Naive thymus-derived CD4-positive, alpha-beta T cell (primary cell): ENCODE measurements at regions of chr18 and their contacts with region 1.

Region 1: DNA sequence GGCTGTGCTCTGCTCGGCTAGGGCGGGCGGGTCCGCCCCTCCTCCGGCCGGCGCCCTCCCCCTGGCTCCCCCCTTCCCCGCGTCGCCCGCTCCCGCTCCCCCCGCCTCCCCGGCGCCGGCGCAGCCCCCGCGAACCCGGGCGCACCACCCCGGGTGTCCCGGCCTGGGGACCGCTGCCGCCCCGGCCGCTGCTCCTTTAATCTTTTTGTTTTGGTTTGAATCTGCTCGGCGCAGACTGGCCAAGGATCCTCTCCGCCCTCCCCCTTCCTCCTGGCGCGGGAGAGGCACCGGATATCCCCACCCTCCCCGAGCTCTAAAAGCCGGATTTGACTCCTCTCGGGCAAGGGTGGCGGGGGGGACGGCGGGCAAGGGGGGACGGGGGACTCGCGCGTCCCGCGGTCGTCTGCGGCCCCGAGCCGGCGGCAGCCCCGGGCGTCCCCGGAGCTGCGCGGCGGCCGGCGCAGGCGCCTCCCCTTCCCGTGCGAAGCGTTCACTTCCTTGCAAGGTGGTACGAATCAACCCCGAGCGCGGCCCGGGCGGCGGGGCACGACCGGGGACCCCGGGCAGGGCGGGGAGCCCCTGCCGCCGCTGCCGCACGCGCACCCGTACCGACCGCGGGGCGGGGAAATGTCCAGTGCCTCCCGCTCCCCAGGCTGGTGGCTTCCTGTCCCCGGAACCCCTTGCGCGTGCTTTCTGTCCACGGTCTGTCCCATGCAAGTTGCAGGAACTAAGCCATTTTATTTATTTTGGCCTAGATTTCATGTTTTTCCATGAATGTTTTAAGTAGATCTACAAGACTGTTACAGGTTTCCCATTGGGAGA is at the start of gene PTGR3:
- DNase-seq: peak; percentile 55 to 78 (median 74)
- ATAC-seq: peak; percentile 67
- H3K4me3 ChIP-seq: peak within 1 kb of the TSS; percentile 89
- H3K4me3 Mint-ChIP-seq: peak within 1 kb of the TSS; percentile 96 to 100 (median 99)
- H3K27ac ChIP-seq: peak within 1 kb of the TSS; percentile 90
- H3K27ac Mint-ChIP-seq: peak within 1 kb of the TSS; percentile 94 to 99 (median 98)
- H3K4me1 ChIP-seq: peaks cover 26 to 33% of the 10 kb centered on the region in 2 donors
- H3K4me1 Mint-ChIP-seq: peaks cover 48 to 67% (median 56%) of the 10 kb centered on the region in 7 donors
- H3K27me3 ChIP-seq: no peaks in the 10 kb centered on the region
- H3K27me3 Mint-ChIP-seq: peaks cover 0 to 36% (median 0%) of the 10 kb centered on the region in 5 donors
- total RNA-seq, gene PTGR3: 25.1 to 59.1 (median 31.7) TPM

Region 2: DNA sequence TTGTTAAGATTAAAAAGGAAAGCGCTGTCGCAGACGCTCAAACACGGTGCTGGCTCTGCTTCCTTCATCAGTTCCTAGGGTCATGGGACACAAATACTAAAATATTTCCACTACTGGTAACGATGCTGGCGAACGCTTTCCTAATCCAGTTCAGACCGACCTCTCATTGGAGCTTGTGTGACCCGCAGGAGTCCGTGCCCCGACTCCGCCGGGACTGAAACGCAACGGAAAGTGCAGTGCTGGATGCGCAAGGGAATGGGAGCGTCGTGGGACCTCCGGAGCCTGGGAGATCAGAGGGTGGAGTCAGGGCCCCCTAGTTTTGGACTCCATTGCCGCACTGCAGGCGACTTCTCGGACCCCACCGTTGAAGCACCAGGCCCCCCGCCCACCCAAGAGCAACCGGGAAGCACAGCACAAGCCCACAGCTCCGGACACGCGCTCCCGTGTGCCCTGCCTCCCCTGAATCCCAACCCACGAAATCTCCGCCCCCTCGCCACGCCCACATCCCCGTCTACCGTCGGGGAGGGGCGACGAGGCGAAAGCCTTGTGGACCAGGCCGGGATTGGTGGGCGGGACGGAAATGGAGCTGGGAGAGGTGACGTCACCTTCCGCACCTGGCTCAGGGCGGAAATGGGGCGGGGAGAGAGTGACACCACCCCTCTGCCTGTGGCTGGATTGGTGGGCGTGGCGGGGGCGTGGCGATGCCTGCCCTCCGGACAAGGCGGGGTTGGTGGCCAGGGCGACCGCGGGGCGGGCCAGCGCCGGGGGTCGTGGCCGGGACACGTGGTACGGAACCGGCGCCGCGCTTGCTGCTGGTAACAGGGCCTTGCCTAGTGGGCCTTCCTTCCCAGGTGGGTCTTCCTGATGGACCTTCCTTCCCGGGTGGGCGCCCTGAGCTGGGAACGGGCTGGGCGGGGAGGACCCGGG is 713.5 kb before region 1 on chr18 and contains the start of gene CNDP2:
- CTCF ChIA-PET with region 1: no interaction called
- POLR2A ChIA-PET with region 1: no interaction called
- intact Hi-C with region 1: loop called (anchors 1 kb)
- DNase-seq: peak; percentile 93 to 100 (median 94)
- ATAC-seq: peak; percentile 89
- H3K4me3 ChIP-seq: peak within 1 kb of the TSS; percentile 75
- H3K4me3 Mint-ChIP-seq: peak within 1 kb of the TSS; percentile 79 to 98 (median 92)
- H3K27ac ChIP-seq: peak within 1 kb of the TSS; percentile 93
- H3K27ac Mint-ChIP-seq: peak within 1 kb of the TSS; percentile 95 to 100 (median 98)
- H3K4me1 ChIP-seq: peaks cover 33 to 43% of the 10 kb centered on the region in 2 donors
- H3K4me1 Mint-ChIP-seq: peaks cover 21 to 62% (median 49%) of the 10 kb centered on the region in 7 donors
- H3K27me3 ChIP-seq: no peaks in the 10 kb centered on the region
- H3K27me3 Mint-ChIP-seq: peaks cover 0 to 20% (median 0%) of the 10 kb centered on the region in 5 donors
- total RNA-seq, gene CNDP2: 112 to 169 (median 148) TPM

Region 3: GRCh38 chr18:74896390-74896991 is 312.8 kb before region 1 on chr18:
- CTCF ChIA-PET with region 1: no interaction called
- POLR2A ChIA-PET with region 1: no interaction called
- intact Hi-C with region 1: loop called in 1 of 2 experiments (anchors 5 kb)
- DNase-seq: peak in 6 of 9 donors; percentile 19 to 45 (median 36)
- ATAC-seq: peak; percentile 76
- H3K4me3 ChIP-seq: no peak overlapping the region
- H3K4me3 Mint-ChIP-seq: no peak overlapping the region
- H3K27ac ChIP-seq: no peak overlapping the region
- H3K27ac Mint-ChIP-seq: peak overlapping the region in 2 of 9 donors; percentile 1 to 11
- H3K4me1 ChIP-seq: no peaks in the 10 kb centered on the region
- H3K4me1 Mint-ChIP-seq: peaks cover 0 to 21% (median 7%) of the 10 kb centered on the region in 7 donors
- H3K27me3 ChIP-seq: no peaks in the 10 kb centered on the region
- H3K27me3 Mint-ChIP-seq: no peaks in the 10 kb centered on the region

Region 4: GRCh38 chr18:75161256-75162028 is 47.9 kb before region 1 on chr18:
- CTCF ChIA-PET with region 1: no interaction called
- POLR2A ChIA-PET with region 1: interaction called, 4 read pairs
- intact Hi-C with region 1: loop called in 1 of 2 experiments (anchors 2 kb)
- DNase-seq: peak in 7 of 9 donors; percentile 26 to 51 (median 37)
- ATAC-seq: peak; percentile 77
- H3K4me3 ChIP-seq: peak overlapping the region; percentile 77
- H3K4me3 Mint-ChIP-seq: peak overlapping the region; percentile 80 to 95 (median 91)
- H3K27ac ChIP-seq: peak overlapping the region; percentile 69
- H3K27ac Mint-ChIP-seq: peak overlapping the region in 8 of 9 donors; percentile 79 to 93 (median 88)
- H3K4me1 ChIP-seq: no peaks in the 10 kb centered on the region
- H3K4me1 Mint-ChIP-seq: peaks cover 7 to 28% (median 12%) of the 10 kb centered on the region in 7 donors
- H3K27me3 ChIP-seq: no peaks in the 10 kb centered on the region
- H3K27me3 Mint-ChIP-seq: peaks cover 0 to 4% (median 0%) of the 10 kb centered on the region in 5 donors

Region 5: DNA sequence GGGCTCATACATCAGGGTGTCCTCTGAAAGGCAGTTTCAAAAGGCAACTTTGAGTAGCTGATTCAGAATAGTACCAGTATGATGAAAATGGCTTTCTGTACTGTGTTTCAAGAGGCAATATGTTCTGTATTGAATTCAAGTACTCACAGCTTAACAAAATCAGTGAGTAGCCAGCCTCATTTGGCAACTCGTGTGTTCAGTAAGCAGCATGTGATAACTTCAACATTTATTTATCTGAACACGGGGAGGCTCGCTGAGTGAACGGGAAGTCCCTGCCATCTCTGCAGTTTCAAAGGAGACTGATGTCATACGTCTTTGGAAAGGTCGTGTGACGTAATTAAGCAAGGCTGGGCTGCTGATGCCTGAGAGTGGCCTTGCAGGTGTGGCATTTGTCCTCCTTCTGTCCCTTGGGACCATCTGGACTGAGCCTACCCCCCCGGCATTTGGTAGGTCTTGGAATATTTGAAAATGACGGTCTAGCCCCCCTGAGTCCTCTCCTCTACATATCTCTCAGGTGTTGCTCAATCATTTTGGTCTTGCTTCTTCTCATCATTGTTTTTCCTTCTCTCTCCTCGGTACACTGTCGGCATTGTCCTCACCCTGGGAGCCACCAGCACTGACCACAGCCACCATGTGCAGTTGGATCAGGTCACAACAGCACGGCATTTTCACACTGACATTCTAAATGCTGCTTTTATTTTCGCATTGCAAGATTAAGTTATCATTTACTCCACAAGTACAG is 155.3 kb after region 1 on chr18:
- CTCF ChIA-PET with region 1: interaction called, 3 read pairs
- POLR2A ChIA-PET with region 1: no interaction called
- intact Hi-C with region 1: loop called in 1 of 2 experiments (anchors 5 kb)
- DNase-seq: no peak
- ATAC-seq: no peak
- H3K4me3 ChIP-seq: no peak overlapping the region
- H3K4me3 Mint-ChIP-seq: no peak overlapping the region
- H3K27ac ChIP-seq: no peak overlapping the region
- H3K27ac Mint-ChIP-seq: peak overlapping the region in 1 of 9 donors; percentile 12
- H3K4me1 ChIP-seq: no peaks in the 10 kb centered on the region
- H3K4me1 Mint-ChIP-seq: peaks cover 0 to 1% (median 0%) of the 10 kb centered on the region in 7 donors
- H3K27me3 ChIP-seq: no peaks in the 10 kb centered on the region
- H3K27me3 Mint-ChIP-seq: peaks cover 0 to 2% (median under 1%) of the 10 kb centered on the region in 5 donors